Right ventricle myocardium inferior (tissue), 1 donor: ENCODE measurements at regions of chr22 and their contacts with region 1.

Region 1: GRCh38 chr22:31230871-31231621 is 18.9 kb downstream of the LIMK2 start:
- DNase-seq: no peak
- ATAC-seq: peak; percentile 68

Region 2: GRCh38 chr22:31160328-31160978 is 70.6 kb before region 1 on chr22:
- intact Hi-C with region 1: loop called (anchors 5 kb)
- DNase-seq: no peak
- ATAC-seq: peak; percentile 40